Activated CD4-positive, alpha-beta T cell treated with anti-CD3 and anti-CD28 coated beads, Interleukin-2, amount 10 ng/mL, durations not matched to agents 24 days and 14 days (primary cell): ENCODE measurements at regions of chr15 and their contacts with region 1.

Region 1: GRCh38 chr15:84716036-84716799 is at the start of gene SEC11A:
- DNase-seq: peak; percentile 97
- H3K4me3 Mint-ChIP-seq: peak within 1 kb of the TSS; percentile 89
- H3K27ac Mint-ChIP-seq: peak within 1 kb of the TSS; percentile 91
- H3K4me1 Mint-ChIP-seq: peaks cover 42% of the 10 kb centered on the region
- H3K27me3 Mint-ChIP-seq: no peaks in the 10 kb centered on the region
- total RNA-seq, gene SEC11A: 101 and 108 TPM in 2 replicates

Region 2: GRCh38 chr15:84600851-84601838 is 115.1 kb before region 1 on chr15 and contains the start of gene ZSCAN2:
- intact Hi-C with region 1: loop called (anchors 2 kb)
- DNase-seq: peak; percentile 98
- H3K4me3 Mint-ChIP-seq: peak within 1 kb of the TSS; percentile 96
- H3K27ac Mint-ChIP-seq: peak within 1 kb of the TSS; percentile 83
- H3K4me1 Mint-ChIP-seq: peaks cover 50% of the 10 kb centered on the region
- H3K27me3 Mint-ChIP-seq: no peaks in the 10 kb centered on the region
- total RNA-seq, gene ZSCAN2: 6.8 TPM in 2 replicates

Region 3: DNA sequence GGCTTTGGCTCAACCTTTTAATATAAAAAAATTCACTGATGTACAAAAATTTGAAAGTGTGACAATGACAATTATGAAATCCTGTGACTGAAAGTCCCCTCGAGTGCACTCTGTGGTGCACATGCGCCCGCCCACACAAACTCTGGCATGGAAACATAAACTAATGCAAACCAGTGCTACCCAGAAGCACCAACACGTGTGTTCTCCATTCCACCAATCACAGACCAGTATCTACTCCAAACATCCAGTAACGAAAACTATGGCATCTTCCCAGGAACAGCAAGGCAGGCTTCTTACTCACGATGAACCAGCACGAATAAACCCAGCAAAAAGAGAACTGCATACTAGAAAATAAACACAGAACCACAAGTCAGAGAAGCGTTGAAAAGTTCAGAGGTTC is 46.5 kb before region 1 on chr15:
- intact Hi-C with region 1: loop called (anchors 1 kb)
- DNase-seq: no peak
- H3K4me3 Mint-ChIP-seq: no peak overlapping the region
- H3K27ac Mint-ChIP-seq: peak overlapping the region; percentile 90
- H3K4me1 Mint-ChIP-seq: peaks cover 32% of the 10 kb centered on the region
- H3K27me3 Mint-ChIP-seq: no peaks in the 10 kb centered on the region

Region 4: GRCh38 chr15:84734794-84735479 is 18.7 kb after region 1 on chr15:
- intact Hi-C with region 1: loop called (anchors 1 kb)
- DNase-seq: peak; percentile 92
- H3K4me3 Mint-ChIP-seq: peak overlapping the region; percentile 79
- H3K27ac Mint-ChIP-seq: peak overlapping the region; percentile 96
- H3K4me1 Mint-ChIP-seq: peaks cover 46% of the 10 kb centered on the region
- H3K27me3 Mint-ChIP-seq: no peaks in the 10 kb centered on the region

Region 5: GRCh38 chr15:84748274-84749110 is 32.3 kb after region 1 on chr15 and contains the start of gene ZNF592:
- intact Hi-C with region 1: loop called (anchors 1 kb)
- DNase-seq: peak; percentile 94
- H3K4me3 Mint-ChIP-seq: peak within 1 kb of the TSS; percentile 97
- H3K27ac Mint-ChIP-seq: peak within 1 kb of the TSS; percentile 94
- H3K4me1 Mint-ChIP-seq: peaks cover 50% of the 10 kb centered on the region
- H3K27me3 Mint-ChIP-seq: no peaks in the 10 kb centered on the region
- total RNA-seq, gene ZNF592: 30.0 and 30.6 TPM in 2 replicates

Region 6: GRCh38 chr15:84761607-84762131 is 45.5 kb after region 1 on chr15:
- intact Hi-C with region 1: loop called (anchors 2 kb)
- DNase-seq: peak; percentile 66
- H3K4me3 Mint-ChIP-seq: no peak overlapping the region
- H3K27ac Mint-ChIP-seq: no peak overlapping the region
- H3K4me1 Mint-ChIP-seq: peaks cover 21% of the 10 kb centered on the region
- H3K27me3 Mint-ChIP-seq: no peaks in the 10 kb centered on the region

Region 7: DNA sequence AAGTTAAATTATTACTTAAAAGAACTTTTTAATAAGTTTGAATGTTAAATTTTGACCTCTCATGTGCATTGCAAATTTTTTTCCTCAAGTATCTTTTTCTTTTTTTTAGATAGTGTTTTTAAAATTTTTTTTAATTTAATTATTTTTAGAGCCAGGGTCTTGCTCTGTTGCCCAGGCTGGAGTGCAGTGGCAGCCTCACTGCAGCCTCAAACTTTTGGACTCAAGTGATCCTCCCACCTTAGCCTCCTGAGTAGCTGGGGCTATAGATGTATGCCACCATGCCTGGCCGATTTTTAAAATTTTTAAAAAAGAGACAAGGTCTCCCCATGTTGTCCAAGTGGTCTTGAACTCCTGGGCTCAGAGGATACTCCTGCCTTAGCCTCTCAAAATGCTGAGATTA is 279.8 kb after region 1 on chr15:
- intact Hi-C with region 1: no loop called
- DNase-seq: no peak
- H3K4me3 Mint-ChIP-seq: no peak overlapping the region
- H3K27ac Mint-ChIP-seq: no peak overlapping the region
- H3K4me1 Mint-ChIP-seq: peaks cover 12% of the 10 kb centered on the region
- H3K27me3 Mint-ChIP-seq: no peaks in the 10 kb centered on the region